Mammary epithelial cell (primary cell): ENCODE measurements at regions of chr5 and their contacts with region 1.

Region 1: GRCh38 chr5:147403651-147404640 is 105.9 kb downstream of the DPYSL3 start:
- DNase-seq: peak; percentile 90
- H3K4me3 ChIP-seq: no peak overlapping the region
- H3K27ac ChIP-seq: peak overlapping the region; percentile 44
- H3K4me1 ChIP-seq: peaks cover 11% of the 10 kb centered on the region
- H3K27me3 ChIP-seq: no peaks in the 10 kb centered on the region
- CTCF ChIP-seq: no peak

Region 2: GRCh38 chr5:147576646-147577535 is 172.9 kb after region 1 on chr5:
- CTCF ChIA-PET with region 1: no interaction called
- dilution Hi-C with region 1: no loop called
- in situ Hi-C with region 1: no loop called
- intact Hi-C with region 1: loop called (anchors 5 kb)
- DNase-seq: peak; percentile 32
- H3K4me3 ChIP-seq: no peak overlapping the region
- H3K27ac ChIP-seq: no peak overlapping the region
- H3K4me1 ChIP-seq: peaks cover 3% of the 10 kb centered on the region
- H3K27me3 ChIP-seq: peaks cover 2% of the 10 kb centered on the region
- CTCF ChIP-seq: peak; percentile 89 to 97

Region 3: DNA sequence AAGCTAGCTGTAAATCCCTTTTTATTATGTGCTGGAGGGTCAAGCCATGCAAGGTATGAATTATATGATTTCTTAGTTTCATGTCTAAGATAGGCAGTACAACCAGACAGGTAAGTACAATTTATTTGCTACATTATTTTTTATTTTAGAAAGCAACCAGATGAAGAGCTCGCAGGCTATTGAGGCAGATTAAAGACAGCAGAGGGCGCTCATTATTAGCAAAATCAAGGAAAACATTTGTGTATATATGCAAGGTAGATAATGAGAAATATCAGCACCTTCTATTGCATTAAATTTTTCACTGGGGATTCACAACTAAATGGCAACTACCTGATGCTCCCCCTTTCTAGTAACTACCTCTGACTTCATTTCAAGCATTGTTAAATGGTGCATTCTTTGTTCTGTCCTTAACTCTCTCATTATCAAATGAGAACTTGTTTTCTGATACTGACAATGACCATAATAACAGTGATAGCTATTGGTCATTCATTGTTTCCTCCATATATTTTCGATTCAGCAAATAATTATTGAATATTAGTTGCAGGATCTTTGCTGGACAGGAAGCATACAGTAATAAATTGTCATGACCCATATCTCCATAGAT is 483.2 kb after region 1 on chr5:
- CTCF ChIA-PET with region 1: no interaction called
- dilution Hi-C with region 1: no loop called
- in situ Hi-C with region 1: no loop called
- intact Hi-C with region 1: no loop called
- DNase-seq: peak; percentile 25
- H3K4me3 ChIP-seq: no peak overlapping the region
- H3K27ac ChIP-seq: no peak overlapping the region
- H3K4me1 ChIP-seq: peaks cover 15% of the 10 kb centered on the region
- H3K27me3 ChIP-seq: no peaks in the 10 kb centered on the region
- CTCF ChIP-seq: peak; percentile 65 to 77

Region 4: GRCh38 chr5:148224131-148224742 is 820.3 kb after region 1 on chr5:
- CTCF ChIA-PET with region 1: no interaction called
- dilution Hi-C with region 1: no loop called
- in situ Hi-C with region 1: no loop called
- intact Hi-C with region 1: no loop called
- DNase-seq: peak; percentile 93
- H3K4me3 ChIP-seq: no peak overlapping the region
- H3K27ac ChIP-seq: peak overlapping the region; percentile 19
- H3K4me1 ChIP-seq: no peaks in the 10 kb centered on the region
- H3K27me3 ChIP-seq: peaks cover 2% of the 10 kb centered on the region
- CTCF ChIP-seq: no peak